Calu3 (cell line): ENCODE measurements at regions of chr6 and their contacts with region 1.

Region 1: DNA sequence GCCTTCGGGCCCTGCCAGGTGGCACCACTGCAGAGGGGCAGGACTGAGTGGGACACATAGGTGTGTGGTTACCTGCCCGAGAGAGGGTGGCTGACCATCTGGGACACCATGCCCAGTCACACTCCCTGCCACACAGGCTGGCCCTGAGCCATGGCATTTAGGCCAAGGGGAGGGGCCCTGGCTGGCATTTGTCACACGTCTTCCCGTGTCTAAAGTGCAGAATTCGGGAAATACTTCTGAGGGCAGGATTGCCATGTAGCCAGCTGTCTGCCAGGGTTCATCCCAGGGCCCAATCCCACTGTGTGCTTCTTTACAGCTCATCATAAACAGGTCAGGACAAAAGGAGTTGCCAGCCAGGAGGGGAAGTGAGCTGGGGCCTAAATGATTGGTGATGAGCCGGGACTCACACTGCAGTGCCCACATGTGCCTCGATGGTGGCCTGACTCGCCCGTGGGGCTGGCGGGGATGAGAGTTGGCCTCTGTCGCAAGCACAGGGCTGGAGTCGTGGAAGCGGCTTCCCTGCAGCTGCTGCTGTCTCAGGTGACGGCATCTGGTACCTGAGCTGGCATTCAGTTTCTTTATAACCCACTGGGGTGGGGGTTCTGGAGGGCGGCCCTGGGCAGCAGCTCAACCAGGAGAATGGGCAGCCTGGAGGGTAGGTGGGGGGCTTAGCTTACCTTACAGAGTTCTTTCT is 5.9 kb upstream of the UNC93A start:
- DNase-seq: peak; percentile 30
- H3K4me3 Mint-ChIP-seq: no peak overlapping the region
- H3K27ac Mint-ChIP-seq: no peak overlapping the region
- H3K4me1 Mint-ChIP-seq: peaks cover 20% of the 10 kb centered on the region
- H3K27me3 Mint-ChIP-seq: peaks cover 21% of the 10 kb centered on the region
- CTCF ChIP-seq: no peak

Region 2: GRCh38 chr6:167219967-167220512 is 65.2 kb before region 1 on chr6:
- CTCF ChIA-PET with region 1: interaction called, 5 read pairs
- intact Hi-C with region 1: loop called (anchors 1 kb)
- DNase-seq: no peak
- H3K4me3 Mint-ChIP-seq: no peak overlapping the region
- H3K27ac Mint-ChIP-seq: peak overlapping the region; percentile 52
- H3K4me1 Mint-ChIP-seq: peaks cover 18% of the 10 kb centered on the region
- H3K27me3 Mint-ChIP-seq: no peaks in the 10 kb centered on the region
- CTCF ChIP-seq: no peak